Naive thymus-derived CD8-positive, alpha-beta T cell (primary cell): ENCODE measurements at regions of chr19 and their contacts with region 1.

Region 1: DNA sequence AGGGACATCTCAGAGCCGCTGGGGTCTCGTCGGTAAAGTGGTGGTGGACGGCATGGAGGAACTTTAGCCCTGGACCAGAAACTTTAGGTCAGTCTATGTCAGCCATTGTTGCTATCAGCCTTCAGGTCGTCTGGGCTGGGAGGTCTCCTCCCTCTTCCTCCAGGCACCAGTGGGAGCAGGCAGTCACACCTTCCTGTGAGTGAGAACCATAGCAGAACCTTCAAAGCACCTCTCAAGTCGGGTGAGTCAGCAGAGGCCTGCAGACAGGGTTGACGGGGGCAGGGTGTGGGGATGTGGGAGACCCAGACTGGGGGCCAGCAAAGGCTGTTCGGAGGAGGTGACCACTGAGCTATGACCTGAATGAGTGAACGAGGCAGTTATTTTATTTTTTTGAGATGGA is 15.4 kb upstream of the SBNO2 start:
- DNase-seq: peak in 2 of 10 donors; percentile 33 to 39
- ATAC-seq: peak; percentile 31
- H3K4me3 Mint-ChIP-seq: peak overlapping the region in 3 of 10 donors; percentile 14 to 63 (median 52)
- H3K27ac Mint-ChIP-seq: peak overlapping the region in 8 of 10 donors; percentile 13 to 95 (median 78)
- H3K4me1 Mint-ChIP-seq: peaks cover 6 to 20% (median 19%) of the 10 kb centered on the region in 4 donors
- H3K27me3 Mint-ChIP-seq: no peaks in the 10 kb centered on the region

Region 2: DNA sequence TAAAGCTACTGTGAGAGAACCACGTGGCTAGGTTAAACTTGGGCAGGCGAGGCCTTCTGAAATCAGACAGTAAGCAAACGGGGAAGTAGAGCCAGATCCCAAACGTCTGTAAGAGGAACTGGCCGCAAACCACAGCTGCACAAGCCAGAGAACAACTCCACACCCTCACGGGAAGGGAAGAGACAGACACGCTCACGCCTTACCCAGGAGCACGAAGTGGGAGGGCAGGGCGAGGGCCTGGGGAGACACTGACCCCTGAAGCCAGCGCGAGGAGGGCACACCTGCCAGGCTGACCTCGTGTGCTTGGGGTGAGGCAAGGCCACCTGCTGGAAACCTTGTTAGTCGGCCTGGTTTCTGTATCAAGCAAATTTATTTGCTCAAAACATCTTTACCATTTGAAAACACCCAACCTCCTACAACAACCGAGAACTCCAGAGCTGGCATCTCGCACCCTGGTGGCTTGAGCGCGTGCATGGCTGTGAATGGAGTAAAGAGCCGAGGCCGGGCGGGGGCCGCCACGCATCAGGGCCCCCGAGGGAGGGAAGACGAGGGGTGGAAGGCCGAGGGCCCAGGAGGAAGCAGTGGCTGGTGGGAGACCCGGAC is 101.5 kb before region 1 on chr19:
- POLR2A ChIA-PET with region 1: interaction called, 17 read pairs
- DNase-seq: peak in 8 of 10 donors; percentile 31 to 79 (median 62)
- ATAC-seq: peak; percentile 26 to 34
- H3K4me3 Mint-ChIP-seq: peak overlapping the region; percentile 54 to 79 (median 74)
- H3K27ac Mint-ChIP-seq: peak overlapping the region; percentile 86 to 98 (median 95)
- H3K4me1 Mint-ChIP-seq: peaks cover 22 to 70% (median 62%) of the 10 kb centered on the region in 4 donors
- H3K27me3 Mint-ChIP-seq: no peaks in the 10 kb centered on the region

Region 3: GRCh38 chr19:1113033-1113985 is 76.1 kb before region 1 on chr19:
- POLR2A ChIA-PET with region 1: interaction called, 31 read pairs
- DNase-seq: peak; percentile 79 to 94 (median 87)
- ATAC-seq: peak; percentile 90 to 95
- H3K4me3 Mint-ChIP-seq: peak overlapping the region in 3 of 10 donors; percentile 4 to 30 (median 19)
- H3K27ac Mint-ChIP-seq: peak overlapping the region in 5 of 10 donors; percentile 29 to 82 (median 69)
- H3K4me1 Mint-ChIP-seq: peaks cover 0 to 7% (median 1%) of the 10 kb centered on the region in 4 donors
- H3K27me3 Mint-ChIP-seq: no peaks in the 10 kb centered on the region